ENCODE measurements at regions of chr12 and their contacts with region 1.

Region 1: DNA sequence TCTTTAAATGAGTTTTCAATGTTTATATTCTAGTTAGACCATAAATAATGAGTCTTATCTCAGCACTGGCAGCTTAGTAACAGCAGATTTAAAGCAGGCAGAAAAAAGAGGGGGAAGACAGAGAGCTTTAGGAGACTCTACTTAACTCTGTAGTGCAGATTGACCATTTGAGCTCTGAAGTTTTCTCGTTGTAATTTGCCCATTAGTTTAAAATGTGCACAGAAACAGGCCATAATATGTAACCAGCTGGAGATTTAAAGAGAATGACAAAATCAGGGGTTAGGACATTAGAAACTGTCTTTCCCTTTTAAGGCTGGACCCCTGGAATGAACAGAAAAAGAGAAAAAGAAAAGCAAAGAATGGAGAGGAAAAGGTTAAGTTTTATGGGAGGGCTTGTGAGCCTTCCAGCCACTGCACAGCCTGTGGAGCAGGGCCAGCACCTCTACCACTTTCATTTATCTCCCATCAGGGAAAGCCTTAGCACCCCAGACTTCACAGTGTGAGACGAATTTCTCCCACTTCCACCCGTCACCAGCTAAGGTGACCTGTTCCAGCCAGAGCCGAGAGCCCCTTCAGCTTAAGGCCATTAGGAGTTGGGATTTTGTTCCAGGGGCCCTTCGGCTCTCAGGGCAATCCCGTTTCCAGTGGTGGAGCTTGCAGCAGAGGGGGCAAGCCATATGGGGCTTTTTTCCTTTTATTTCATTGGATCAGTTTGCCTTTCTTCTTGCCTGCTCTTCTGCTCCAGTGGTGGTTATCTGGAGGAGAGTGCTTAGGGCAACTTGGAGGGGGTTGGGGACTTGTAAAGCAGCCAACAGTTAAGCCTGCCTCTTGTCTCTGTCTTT is 8.0 kb downstream of the IL22 start:
- DNase-seq: no peak
- H3K4me3 ChIP-seq: peak overlapping the region in 2 of 3 donors; percentile 29 to 54
- H3K27ac ChIP-seq: peak overlapping the region in 1 of 2 donors; percentile 38
- H3K4me1 ChIP-seq: no peaks in the 10 kb centered on the region
- H3K27me3 ChIP-seq: no peaks in the 10 kb centered on the region
- CTCF ChIP-seq: no peak
- POLR2A ChIP-seq: no peak

Region 2: DNA sequence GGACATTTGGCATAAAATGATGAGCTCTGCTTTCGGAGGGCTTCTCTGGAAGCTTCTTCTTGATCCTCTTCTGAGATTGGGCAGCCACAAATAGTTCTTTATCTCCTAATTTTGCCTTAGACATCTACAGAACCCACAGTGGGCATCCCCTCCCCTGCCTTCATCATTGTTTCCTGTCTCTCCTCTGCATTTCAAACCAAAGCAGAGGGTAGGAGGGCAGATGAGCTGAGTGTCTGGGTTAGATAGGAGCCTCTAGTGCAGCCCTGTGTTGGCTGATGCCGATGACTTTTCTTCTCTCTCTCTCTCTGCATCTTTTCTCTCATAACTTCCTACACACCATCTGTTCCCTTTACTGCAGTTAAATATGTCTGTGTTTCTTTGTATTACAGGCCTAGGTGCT is 11.3 kb before region 1 on chr12:
- intact Hi-C with region 1: loop called (anchors 1 kb)
- DNase-seq: no peak
- H3K4me3 ChIP-seq: no peak overlapping the region
- H3K27ac ChIP-seq: no peak overlapping the region
- H3K4me1 ChIP-seq: no peaks in the 10 kb centered on the region
- H3K27me3 ChIP-seq: no peaks in the 10 kb centered on the region
- CTCF ChIP-seq: no peak
- POLR2A ChIP-seq: no peak

Measured in breast epithelium (tissue), 4 donors.